ENCODE measurements at regions of chr7 and their contacts with region 1.

Region 1: GRCh38 chr7:101542527-101543241 is 86.4 kb downstream of the MYL10 start:
- DNase-seq: peak in 1 of 2 donors; percentile 80
- H3K4me3 ChIP-seq: no peak overlapping the region
- H3K27ac ChIP-seq: no peak overlapping the region
- H3K4me1 ChIP-seq: peaks cover 0 to 4% of the 10 kb centered on the region in 2 donors
- H3K27me3 ChIP-seq: no peaks in the 10 kb centered on the region
- CTCF ChIP-seq: peak; percentile 86 to 98 (median 88)

Region 2: DNA sequence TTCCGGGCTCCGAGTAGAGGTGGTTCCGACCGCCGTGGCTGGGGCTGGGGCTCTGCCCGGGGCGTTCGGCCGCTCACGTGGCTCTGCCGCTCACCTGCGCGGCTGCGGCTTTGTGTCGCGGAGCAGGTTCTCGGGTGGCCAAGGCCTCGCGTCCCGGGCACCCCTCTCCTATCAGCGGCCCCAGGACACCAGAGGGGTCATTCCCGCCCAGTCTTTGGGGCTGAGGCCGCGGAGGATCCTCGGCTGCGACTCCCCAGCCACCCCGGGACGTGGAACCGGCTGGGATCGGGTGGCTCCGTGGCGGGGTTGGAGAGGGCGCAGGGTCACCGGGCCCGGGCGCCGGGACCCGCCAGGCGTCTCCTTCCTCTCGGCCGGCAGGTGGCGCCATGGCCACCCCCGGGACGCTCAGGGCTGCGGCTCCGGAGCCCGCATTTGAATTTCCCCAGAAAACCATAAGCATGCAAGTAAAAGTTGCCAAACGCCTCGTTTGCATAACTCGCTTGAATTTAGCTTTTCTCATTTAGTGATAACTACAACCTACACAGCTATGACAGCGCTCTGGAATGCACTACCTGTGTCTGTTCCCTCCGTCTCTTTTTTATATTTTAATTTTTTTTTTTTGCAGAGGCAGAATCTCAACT is 178.8 kb before region 1 on chr7:
- intact Hi-C with region 1: loop called (anchors 1 kb)
- DNase-seq: peak in 1 of 2 donors; percentile 74
- H3K4me3 ChIP-seq: peak overlapping the region; percentile 61 to 62
- H3K27ac ChIP-seq: no peak overlapping the region
- H3K4me1 ChIP-seq: peaks cover 3 to 17% of the 10 kb centered on the region in 2 donors
- H3K27me3 ChIP-seq: no peaks in the 10 kb centered on the region
- CTCF ChIP-seq: peak; percentile 68 to 95 (median 94)

Region 3: DNA sequence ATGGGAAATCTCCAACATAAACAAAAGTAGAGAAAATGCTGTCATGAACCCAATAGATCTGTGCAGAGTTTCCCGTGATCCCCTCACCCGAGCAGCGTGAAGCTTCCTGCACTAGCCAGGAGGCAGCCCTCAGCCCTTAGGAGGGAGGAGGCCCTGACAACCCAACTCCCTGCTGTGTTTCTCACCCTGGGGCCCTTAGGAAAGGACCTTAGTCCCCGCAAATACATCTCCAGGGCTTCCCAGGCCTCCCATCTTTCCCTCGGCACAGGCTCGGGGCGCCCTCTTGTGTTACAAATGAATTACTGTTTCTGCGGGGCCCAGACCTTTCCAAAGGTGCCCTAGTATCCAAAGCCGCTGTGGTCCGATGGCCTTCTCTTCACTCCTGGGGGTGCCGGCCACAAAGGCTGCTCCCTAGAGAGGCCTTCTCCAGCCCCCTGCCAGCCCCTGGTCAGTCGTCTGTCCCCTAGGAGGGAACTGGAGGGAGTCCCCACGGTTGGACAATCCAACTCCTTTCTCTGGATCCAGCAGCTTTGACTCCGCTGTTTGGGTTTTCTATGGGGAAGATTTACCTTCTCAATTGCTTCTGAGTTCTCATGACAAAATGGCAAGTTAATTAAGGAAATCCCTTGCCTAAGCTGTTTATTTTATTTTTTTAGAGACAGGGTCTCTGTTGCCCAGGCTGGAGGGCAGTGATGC is 694.1 kb after region 1 on chr7:
- intact Hi-C with region 1: loop called (anchors 2 kb)
- DNase-seq: peak in 1 of 2 donors; percentile 77
- H3K4me3 ChIP-seq: no peak overlapping the region
- H3K27ac ChIP-seq: no peak overlapping the region
- H3K4me1 ChIP-seq: no peaks in the 10 kb centered on the region
- H3K27me3 ChIP-seq: no peaks in the 10 kb centered on the region
- CTCF ChIP-seq: peak; percentile 65 to 83 (median 68)

Region 4: GRCh38 chr7:102272075-102272917 is 729.6 kb after region 1 on chr7:
- intact Hi-C with region 1: loop called (anchors 1 kb)
- DNase-seq: peak in 1 of 2 donors; percentile 83
- H3K4me3 ChIP-seq: no peak overlapping the region
- H3K27ac ChIP-seq: no peak overlapping the region
- H3K4me1 ChIP-seq: no peaks in the 10 kb centered on the region
- H3K27me3 ChIP-seq: no peaks in the 10 kb centered on the region
- CTCF ChIP-seq: peak; percentile 85 to 93 (median 85)

Region 5: DNA sequence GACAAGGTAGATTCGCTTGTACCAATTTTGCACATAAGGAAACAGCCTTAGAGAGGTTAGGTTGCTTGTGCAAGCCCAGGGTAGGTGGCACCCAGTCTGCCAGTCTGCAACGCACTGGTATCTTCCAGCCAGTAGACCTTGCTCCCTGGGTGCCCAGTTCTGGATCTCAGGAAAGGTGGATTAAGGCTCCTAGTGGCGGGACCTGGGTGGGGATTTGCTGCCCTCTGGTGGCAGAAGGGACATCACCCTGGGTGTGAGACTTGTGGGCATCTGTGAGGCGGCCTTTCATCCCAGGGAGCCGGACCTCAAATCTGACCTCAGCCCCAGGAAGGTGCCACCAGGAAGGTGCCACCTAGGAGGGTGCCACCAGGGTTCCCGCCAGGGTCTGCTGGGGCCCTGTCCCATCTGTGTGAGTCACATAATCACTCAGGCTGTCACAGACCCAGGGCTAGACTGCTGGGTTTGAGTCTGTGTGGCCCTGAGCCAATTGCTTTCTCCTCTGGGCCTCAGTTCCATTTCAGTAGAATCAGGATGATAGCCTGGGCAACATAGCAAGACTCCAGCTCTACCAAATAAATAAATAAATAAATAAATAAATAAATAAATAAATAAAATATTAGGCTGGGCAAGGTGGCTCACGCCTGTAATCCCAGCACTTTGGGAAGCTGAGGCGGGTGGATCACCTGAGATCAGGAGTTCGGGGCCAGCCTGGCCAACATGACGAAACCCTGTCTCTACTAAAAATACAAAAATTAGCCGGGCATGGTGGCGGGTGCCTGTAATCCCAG is 848.2 kb after region 1 on chr7:
- intact Hi-C with region 1: loop called (anchors 5 kb)
- DNase-seq: peak; percentile 27 to 88
- H3K4me3 ChIP-seq: no peak overlapping the region
- H3K27ac ChIP-seq: no peak overlapping the region
- H3K4me1 ChIP-seq: no peaks in the 10 kb centered on the region
- H3K27me3 ChIP-seq: no peaks in the 10 kb centered on the region
- CTCF ChIP-seq: peak; percentile 86 to 94 (median 89)